ENCODE measurements at regions of chr11 and their contacts with region 1.

Region 1: DNA sequence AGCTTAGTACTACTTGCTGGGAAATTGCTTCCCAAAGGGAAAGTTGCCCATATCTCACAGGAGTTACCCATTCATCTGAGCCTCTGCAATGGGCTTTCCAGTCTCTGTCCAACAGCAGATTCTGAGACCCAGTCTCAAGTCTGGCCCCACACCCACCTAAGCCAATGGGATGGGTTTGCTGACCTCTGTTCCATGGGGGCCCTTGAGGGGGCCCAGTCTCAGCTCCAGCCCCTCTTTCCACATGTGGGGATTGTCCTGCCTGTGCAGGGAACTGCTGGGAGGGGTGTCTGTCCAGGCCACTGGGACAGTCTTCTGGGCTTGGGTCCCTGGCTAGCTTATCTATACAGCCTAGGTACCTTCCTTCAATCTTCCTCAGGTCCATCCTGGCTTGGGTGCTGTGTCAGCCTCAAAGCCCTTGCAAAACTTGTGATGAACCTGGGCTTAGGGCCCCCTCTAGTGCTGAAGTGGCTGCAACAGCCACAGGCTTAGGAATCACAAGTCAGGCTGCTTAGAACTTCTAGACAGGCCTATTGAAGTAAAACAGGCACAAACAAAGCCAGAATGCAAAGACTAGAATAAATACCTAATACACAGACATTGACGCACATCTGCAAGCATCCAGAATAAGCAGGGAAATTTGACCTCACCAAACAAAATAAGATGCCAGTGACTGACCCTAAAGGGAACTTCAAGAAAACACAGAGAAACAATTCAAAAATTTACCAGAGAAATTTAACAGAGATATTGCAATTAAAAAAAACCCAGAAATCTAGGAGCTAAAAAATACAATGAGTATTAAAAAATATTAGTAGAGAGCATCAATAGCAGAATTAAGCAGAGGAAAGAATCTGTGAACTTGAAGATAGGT is 11.7 kb upstream of the PATL1 start:
- DNase-seq: peak; percentile 77
- ATAC-seq: peak; percentile 100
- H3K4me3 ChIP-seq: no peak overlapping the region
- H3K27ac ChIP-seq: no peak overlapping the region
- H3K4me1 ChIP-seq: 0 out of 4 replicates have a peak, but pooled peaks cover 0 to 2% of the 10 kb centered on the region in 2 experiments
- H3K27me3 ChIP-seq: no peaks in the 10 kb centered on the region
- CTCF ChIP-seq: peak; percentile 83 to 92 (median 89)
- POLR2A ChIP-seq: no peak
- RAD21 ChIP-seq: peak; percentile 92

Region 2: GRCh38 chr11:59207988-59208451 is 472.5 kb before region 1 on chr11:
- CTCF ChIA-PET with region 1: no interaction called
- POLR2A ChIA-PET with region 1: no interaction called
- RAD21 ChIA-PET with region 1: no interaction called
- intact Hi-C with region 1: loop called (anchors 2 kb)
- DNase-seq: no peak
- ATAC-seq: peak; percentile 58
- H3K4me3 ChIP-seq: no peak overlapping the region
- H3K27ac ChIP-seq: no peak overlapping the region
- H3K4me1 ChIP-seq: no peaks in the 10 kb centered on the region; a peak in 2 of 4 replicates
- H3K27me3 ChIP-seq: no peaks in the 10 kb centered on the region
- CTCF ChIP-seq: peak; percentile 61 to 78 (median 70)
- POLR2A ChIP-seq: no peak
- RAD21 ChIP-seq: peak; percentile 72

Region 3: DNA sequence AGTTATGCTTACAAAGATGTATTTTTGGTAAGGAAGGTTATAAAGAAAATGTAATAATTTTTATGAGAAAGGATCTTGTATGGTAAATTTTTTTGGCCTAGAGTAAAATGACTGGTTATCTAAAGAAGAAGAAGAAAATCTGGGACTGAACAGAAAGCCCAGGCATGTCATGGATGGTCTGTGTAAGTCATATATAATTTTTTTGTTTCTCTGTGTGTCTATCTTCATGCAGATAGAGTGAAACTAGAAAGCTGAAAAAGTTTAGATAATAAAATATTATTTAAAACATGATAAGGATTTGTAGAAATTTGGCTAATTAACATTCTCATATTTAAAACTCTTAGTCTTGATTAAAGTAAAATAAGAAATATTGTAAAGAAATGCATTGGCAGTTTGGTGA is 440.2 kb before region 1 on chr11:
- CTCF ChIA-PET with region 1: no interaction called
- POLR2A ChIA-PET with region 1: no interaction called
- RAD21 ChIA-PET with region 1: no interaction called
- intact Hi-C with region 1: no loop called
- DNase-seq: no peak
- ATAC-seq: no peak
- H3K4me3 ChIP-seq: no peak overlapping the region
- H3K27ac ChIP-seq: no peak overlapping the region
- H3K4me1 ChIP-seq: no peaks in the 10 kb centered on the region
- H3K27me3 ChIP-seq: no peaks in the 10 kb centered on the region
- CTCF ChIP-seq: no peak
- POLR2A ChIP-seq: no peak
- RAD21 ChIP-seq: no peak

Region 4: DNA sequence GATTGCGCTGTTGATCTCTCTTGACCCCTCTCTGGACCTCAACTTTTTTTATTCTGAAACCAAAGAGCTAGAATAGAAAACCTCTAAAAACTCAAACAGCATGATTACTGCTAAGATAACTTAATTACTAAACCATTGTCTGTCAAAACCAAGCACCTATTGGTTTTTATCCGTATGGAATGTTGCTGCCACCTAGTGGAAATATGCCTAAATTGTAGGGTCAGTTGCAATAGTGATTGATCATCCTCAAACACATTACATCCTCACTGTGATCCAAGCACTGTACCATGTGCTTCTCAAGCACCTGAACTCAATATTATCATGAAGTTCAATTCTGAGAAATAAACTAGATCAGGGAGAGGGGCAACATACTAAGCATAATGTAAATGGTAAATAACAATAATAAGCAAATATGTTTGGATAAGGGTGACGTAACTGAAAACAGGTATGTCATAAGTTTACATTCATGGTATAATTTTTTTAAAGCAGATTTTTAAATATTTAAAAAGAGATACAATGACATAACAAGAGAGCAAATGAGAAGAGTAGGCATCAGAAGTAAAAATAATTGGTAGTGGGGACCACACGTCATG is 250.5 kb before region 1 on chr11:
- CTCF ChIA-PET with region 1: no interaction called
- POLR2A ChIA-PET with region 1: no interaction called
- RAD21 ChIA-PET with region 1: no interaction called
- intact Hi-C with region 1: loop called (anchors 1 kb)
- DNase-seq: peak; percentile 56
- ATAC-seq: peak; percentile 85
- H3K4me3 ChIP-seq: no peak overlapping the region
- H3K27ac ChIP-seq: no peak overlapping the region
- H3K4me1 ChIP-seq: no peaks in the 10 kb centered on the region
- H3K27me3 ChIP-seq: no peaks in the 10 kb centered on the region
- CTCF ChIP-seq: peak; percentile 65 to 91 (median 76); a peak in 5 of 6 replicates
- POLR2A ChIP-seq: no peak
- RAD21 ChIP-seq: peak; percentile 80

Region 5: DNA sequence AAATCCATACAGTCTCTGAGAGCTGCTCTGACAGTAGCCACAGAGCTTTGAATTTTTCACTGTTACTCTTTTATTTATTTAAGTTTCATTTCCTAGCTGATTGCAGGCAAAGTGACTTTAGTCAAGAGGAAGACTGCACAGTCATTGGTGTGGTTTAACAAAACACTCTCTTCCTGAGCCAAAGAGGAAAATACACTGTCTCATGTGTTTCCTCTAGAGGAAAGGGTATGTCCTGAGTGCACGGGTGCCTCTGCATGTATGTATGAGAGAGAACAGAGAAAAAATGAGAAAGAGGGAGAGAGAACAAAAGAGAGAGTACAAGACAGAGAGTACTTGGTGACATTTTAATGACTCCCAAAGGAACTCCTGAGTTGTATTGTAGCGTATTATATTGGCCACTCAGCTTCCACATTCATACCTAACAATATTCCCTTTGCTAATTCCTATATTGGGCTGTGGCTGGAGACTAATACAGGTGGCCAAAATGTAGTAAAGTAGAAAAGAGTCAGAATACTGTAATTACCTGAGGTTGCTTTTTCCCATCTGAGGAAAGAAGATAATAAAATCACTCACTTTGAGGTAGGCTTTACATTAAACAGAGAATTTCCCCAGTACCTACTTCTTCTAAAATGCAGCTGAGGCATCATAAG is 169.5 kb before region 1 on chr11 and contains the start of gene OR4D9:
- CTCF ChIA-PET with region 1: no interaction called
- POLR2A ChIA-PET with region 1: no interaction called
- RAD21 ChIA-PET with region 1: no interaction called
- intact Hi-C with region 1: no loop called
- DNase-seq: no peak
- ATAC-seq: no peak
- H3K4me3 ChIP-seq: no peak within 1 kb of the TSS
- H3K27ac ChIP-seq: no peak within 1 kb of the TSS
- H3K4me1 ChIP-seq: no peaks in the 10 kb centered on the region
- H3K27me3 ChIP-seq: no peaks in the 10 kb centered on the region
- CTCF ChIP-seq: no peak
- POLR2A ChIP-seq: no peak
- RAD21 ChIP-seq: no peak
- total RNA-seq, gene OR4D9: not detected

Region 6: GRCh38 chr11:59542142-59542810 is 138.2 kb before region 1 on chr11:
- CTCF ChIA-PET with region 1: interaction called, 8 read pairs
- POLR2A ChIA-PET with region 1: no interaction called
- RAD21 ChIA-PET with region 1: interaction called in 1 of 2 experiments, 7 read pairs
- intact Hi-C with region 1: loop called (anchors 2 kb)
- DNase-seq: no peak
- ATAC-seq: no peak
- H3K4me3 ChIP-seq: no peak overlapping the region
- H3K27ac ChIP-seq: no peak overlapping the region
- H3K4me1 ChIP-seq: peaks cover 24 to 43% of the 10 kb centered on the region in 2 experiments
- H3K27me3 ChIP-seq: no peaks in the 10 kb centered on the region
- CTCF ChIP-seq: no peak
- POLR2A ChIP-seq: no peak
- RAD21 ChIP-seq: no peak

Measured in HCT116 (cell line).